ENCODE measurements at regions of chr2 and their contacts with region 1.

Region 1: DNA sequence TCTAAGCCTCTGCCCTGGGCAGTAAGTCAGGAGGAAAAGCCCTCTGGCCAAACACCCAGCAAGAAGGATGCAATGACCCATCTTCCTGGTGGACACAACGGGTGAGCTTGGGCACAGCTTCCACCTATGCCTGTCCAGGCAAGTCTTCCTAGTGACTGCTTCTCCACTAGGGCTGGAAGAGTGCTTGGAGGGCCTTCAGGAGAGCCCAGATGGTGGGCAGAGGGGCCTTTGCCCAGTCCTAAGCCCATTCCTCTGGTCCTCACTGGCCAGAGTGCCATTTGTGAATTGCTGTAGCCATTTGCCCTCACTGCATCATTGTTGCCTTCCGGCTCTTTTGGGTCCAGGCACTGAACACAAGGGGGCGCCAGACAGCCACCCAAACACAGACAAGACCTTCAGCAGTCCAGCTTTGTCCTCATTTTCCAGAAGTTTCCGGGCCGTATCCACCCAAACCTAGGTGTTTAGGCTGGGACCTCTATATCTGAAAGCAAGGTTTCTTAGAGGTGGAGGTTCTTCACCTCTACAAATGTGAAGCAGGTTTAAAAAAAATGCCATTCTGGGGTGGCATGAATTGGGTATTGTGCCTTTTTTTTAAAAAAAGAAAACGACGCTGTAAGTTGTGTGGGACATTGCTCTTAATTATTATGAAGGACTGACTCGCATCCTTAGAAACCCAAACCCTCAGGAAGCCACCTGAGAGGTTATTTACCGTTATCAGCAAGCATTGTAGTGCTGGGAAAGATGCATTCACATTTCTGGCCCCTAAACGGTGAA is 29.5 kb downstream of the PAX8 start:
- DNase-seq: peak; percentile 43 to 85
- H3K4me3 ChIP-seq: no peak overlapping the region
- H3K27ac ChIP-seq: no peak overlapping the region
- H3K4me1 ChIP-seq: 0 out of 7 replicates have a peak, but pooled peaks cover 0 to 1% (median 0%) of the 10 kb centered on the region in 4 experiments
- H3K27me3 ChIP-seq: no peaks in the 10 kb centered on the region
- CTCF ChIP-seq: peak; percentile 75 to 95 (median 87)
- EP300 ChIP-seq: no peak
- POLR2A ChIP-seq: no peak
- RAD21 ChIP-seq: peak; percentile 92 to 95

Region 2: DNA sequence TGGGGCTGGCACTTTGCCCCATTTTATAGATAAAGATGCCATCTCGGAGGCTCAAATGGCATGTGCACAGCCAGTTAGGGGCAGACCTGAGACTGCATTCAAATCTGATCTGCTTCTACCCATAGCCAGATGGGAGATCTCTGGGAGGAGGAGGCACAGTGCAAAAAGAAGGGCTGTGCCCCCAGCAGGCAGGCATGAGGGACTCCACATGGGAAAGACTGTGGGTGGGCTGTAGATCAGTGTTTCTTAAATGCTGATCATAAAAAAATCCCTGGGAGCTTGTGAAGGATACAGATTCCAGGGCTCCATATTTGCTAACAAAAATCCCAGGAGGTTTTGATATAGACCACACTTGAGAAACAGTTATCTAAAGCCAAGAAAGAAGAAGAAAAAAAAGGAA is 14.4 kb after region 1 on chr2:
- CTCF ChIA-PET with region 1: interaction called, 24 read pairs
- POLR2A ChIA-PET with region 1: interaction called, 3 read pairs
- DNase-seq: no peak
- H3K4me3 ChIP-seq: no peak overlapping the region
- H3K27ac ChIP-seq: no peak overlapping the region
- H3K4me1 ChIP-seq: no peaks in the 10 kb centered on the region; a peak in 1 of 7 replicates
- H3K27me3 ChIP-seq: peaks cover 0 to 15% (median 11%) of the 10 kb centered on the region in 4 experiments; a peak in 4 of 7 replicates
- CTCF ChIP-seq: no peak
- EP300 ChIP-seq: no peak
- POLR2A ChIP-seq: no peak
- RAD21 ChIP-seq: no peak

Region 3: DNA sequence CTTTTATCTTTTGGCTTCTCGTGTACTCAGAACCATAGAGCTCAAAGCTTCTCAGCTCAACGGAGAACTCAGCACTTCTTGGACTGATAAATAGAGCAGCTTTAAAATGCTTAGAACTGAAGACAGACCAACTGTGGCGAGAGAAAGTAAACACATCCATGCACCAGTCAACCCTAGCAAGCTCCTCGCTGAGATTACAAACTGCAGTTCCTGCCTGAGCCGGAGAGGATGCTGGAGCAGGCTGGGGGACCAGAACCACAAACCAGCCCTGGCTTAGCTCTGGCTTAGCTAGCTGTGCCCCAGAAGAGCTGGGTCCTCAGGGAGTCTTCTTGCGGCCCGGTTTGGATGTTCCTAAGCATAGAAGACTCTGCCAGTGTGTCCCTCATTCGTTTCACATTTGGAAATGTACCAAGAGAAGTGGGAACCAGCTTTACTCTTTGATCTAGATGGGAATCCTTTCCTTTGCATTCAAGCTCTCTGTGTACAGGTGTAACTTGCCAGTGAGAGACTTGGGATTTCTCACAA is 23.9 kb after region 1 on chr2:
- CTCF ChIA-PET with region 1: interaction called, 45 read pairs
- POLR2A ChIA-PET with region 1: no interaction called
- DNase-seq: peak in 1 of 2 experiments; percentile 59
- H3K4me3 ChIP-seq: peak overlapping the region in 1 of 4 experiments; percentile 47; a peak in 2 of 8 replicates
- H3K27ac ChIP-seq: no peak overlapping the region
- H3K4me1 ChIP-seq: peaks cover 4 to 8% (median 7%) of the 10 kb centered on the region in 4 experiments
- H3K27me3 ChIP-seq: peaks cover 55 to 83% (median 74%) of the 10 kb centered on the region in 4 experiments
- CTCF ChIP-seq: peak; percentile 45 to 53 (median 45)
- EP300 ChIP-seq: no peak
- POLR2A ChIP-seq: no peak
- RAD21 ChIP-seq: peak; percentile 25 to 41; a peak in 3 of 4 replicates

Region 4: GRCh38 chr2:113305146-113305545 is 56.0 kb after region 1 on chr2:
- CTCF ChIA-PET with region 1: interaction called, 13 read pairs
- POLR2A ChIA-PET with region 1: no interaction called
- DNase-seq: no peak
- H3K4me3 ChIP-seq: no peak overlapping the region
- H3K27ac ChIP-seq: no peak overlapping the region
- H3K4me1 ChIP-seq: peaks cover 0 to 5% (median 2%) of the 10 kb centered on the region in 4 experiments; a peak in 2 of 7 replicates
- H3K27me3 ChIP-seq: no peaks in the 10 kb centered on the region
- CTCF ChIP-seq: no peak
- EP300 ChIP-seq: no peak
- POLR2A ChIP-seq: no peak
- RAD21 ChIP-seq: no peak

Region 5: GRCh38 chr2:113370478-113371091 is 121.4 kb after region 1 on chr2:
- CTCF ChIA-PET with region 1: interaction called, 24 read pairs
- POLR2A ChIA-PET with region 1: no interaction called
- DNase-seq: peak; percentile 9 to 66
- H3K4me3 ChIP-seq: no peak overlapping the region
- H3K27ac ChIP-seq: no peak overlapping the region
- H3K4me1 ChIP-seq: no peaks in the 10 kb centered on the region
- H3K27me3 ChIP-seq: no peaks in the 10 kb centered on the region
- CTCF ChIP-seq: peak; percentile 41 to 81 (median 75)
- EP300 ChIP-seq: no peak
- POLR2A ChIP-seq: no peak
- RAD21 ChIP-seq: peak; percentile 87 to 88

Region 6: DNA sequence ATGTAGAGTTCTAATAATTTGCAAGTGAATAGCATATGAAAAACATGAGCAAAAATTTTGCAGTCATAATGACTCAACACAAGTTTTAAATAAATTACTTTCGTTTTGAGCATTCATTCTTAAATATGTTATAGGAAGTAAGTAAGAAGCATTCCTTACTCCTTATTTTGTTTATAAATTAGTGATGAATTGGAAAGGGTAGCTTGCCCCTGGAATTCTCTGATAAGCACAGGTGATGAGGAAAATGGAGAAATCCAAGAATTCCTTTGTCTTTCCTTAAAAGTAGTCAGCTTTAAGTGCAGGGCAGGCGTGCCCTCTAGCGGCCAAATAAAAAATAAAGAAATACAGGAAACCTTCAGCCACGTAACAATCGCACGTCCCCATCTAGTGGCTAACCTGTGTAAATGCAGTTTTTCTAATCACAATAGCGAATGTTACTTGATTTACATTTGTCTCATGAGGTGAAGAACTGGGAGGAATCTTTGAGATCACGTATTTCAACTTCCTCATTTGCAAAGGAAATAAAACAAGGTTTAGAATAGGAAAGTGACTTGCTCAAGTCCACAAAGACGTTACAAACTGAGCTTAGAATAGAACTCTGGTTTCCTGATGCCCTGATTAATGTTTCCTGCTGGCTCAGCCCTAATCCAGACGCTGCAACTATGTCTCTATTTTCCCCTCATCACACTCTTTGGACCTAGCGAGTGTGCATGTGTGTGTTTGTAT is 141.1 kb after region 1 on chr2:
- CTCF ChIA-PET with region 1: interaction called, 13 read pairs
- POLR2A ChIA-PET with region 1: no interaction called
- DNase-seq: peak in 1 of 2 experiments; percentile 62
- H3K4me3 ChIP-seq: no peak overlapping the region
- H3K27ac ChIP-seq: no peak overlapping the region
- H3K4me1 ChIP-seq: no peaks in the 10 kb centered on the region
- H3K27me3 ChIP-seq: no peaks in the 10 kb centered on the region
- CTCF ChIP-seq: peak in 2 of 3 experiments; percentile 84 to 99; a peak in 3 of 4 replicates
- EP300 ChIP-seq: no peak
- POLR2A ChIP-seq: no peak
- RAD21 ChIP-seq: peak; percentile 84 to 85

Measured in H1 (cell line).